ENCODE measurements at regions of chr22 and their contacts with region 1.

Region 1: GRCh38 chr22:40436505-40437451 is 66.4 kb downstream of the SGSM3 start:
- DNase-seq: peak in 9 of 35 experiments; percentile 5 to 81 (median 24)
- ATAC-seq: peak; percentile 59 to 76 (median 64)
- H3K4me3 ChIP-seq: peak overlapping the region in 1 of 2 donors; percentile 27
- H3K4me3 Mint-ChIP-seq: peak overlapping the region in 1 of 3 donors; percentile 48
- H3K27ac ChIP-seq: peak overlapping the region; percentile 28
- H3K27ac Mint-ChIP-seq: peak overlapping the region; percentile 65 to 82
- H3K4me1 ChIP-seq: peaks cover 7 to 28% of the 10 kb centered on the region in 2 experiments
- H3K4me1 Mint-ChIP-seq: peaks cover 37 to 73% (median 61%) of the 10 kb centered on the region in 3 donors
- H3K27me3 ChIP-seq: no peaks in the 10 kb centered on the region
- H3K27me3 Mint-ChIP-seq: no peaks in the 10 kb centered on the region

Region 2: DNA sequence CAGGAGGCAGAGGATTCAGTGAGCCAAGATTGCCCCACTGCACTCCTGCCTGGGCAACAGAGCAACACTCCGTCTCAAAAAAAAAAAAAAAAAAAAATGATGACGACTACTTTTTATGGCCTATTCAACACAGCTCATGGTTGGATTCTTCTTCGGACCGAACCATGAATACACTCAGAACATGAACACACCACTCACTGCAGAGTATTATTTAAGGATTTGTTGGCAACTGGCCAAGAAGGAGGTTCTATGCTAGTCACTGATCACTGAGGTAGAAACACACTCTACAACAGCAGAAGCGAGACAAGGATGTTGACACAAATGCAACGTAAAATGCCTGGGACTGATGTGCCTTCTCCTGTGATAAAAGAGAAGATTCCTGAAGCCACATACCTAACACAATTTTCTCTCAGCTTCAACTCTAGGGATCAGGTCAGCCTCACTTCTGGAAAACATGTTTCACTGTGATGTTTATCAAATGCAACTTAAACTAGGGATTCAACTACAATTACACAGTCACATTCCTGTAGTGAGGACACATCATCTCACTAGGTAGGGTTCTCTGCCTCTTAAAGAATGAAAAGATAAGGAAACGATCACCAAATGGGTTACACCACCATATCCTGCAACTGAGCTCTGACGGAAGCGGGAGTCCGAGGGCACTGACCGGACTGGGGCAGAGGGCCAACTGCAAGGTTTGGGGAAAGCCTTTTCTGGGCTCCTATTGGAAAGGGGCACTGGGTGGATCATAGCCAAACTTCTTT is 16.1 kb after region 1 on chr22:
- CTCF ChIA-PET with region 1: interaction called, 4 to 10 read pairs
- POLR2A ChIA-PET with region 1: interaction called, 3 to 8 read pairs
- DNase-seq: peak in 1 of 35 experiments; percentile 41
- ATAC-seq: peak in 1 of 4 experiments; percentile 38
- H3K4me3 ChIP-seq: no peak overlapping the region
- H3K4me3 Mint-ChIP-seq: peak overlapping the region; percentile 14 to 69 (median 49)
- H3K27ac ChIP-seq: no peak overlapping the region
- H3K27ac Mint-ChIP-seq: peak overlapping the region; percentile 91 to 94
- H3K4me1 ChIP-seq: peaks cover 33 to 59% of the 10 kb centered on the region in 2 experiments
- H3K4me1 Mint-ChIP-seq: peaks cover 72 to 88% (median 83%) of the 10 kb centered on the region in 3 donors
- H3K27me3 ChIP-seq: no peaks in the 10 kb centered on the region
- H3K27me3 Mint-ChIP-seq: no peaks in the 10 kb centered on the region

Region 3: DNA sequence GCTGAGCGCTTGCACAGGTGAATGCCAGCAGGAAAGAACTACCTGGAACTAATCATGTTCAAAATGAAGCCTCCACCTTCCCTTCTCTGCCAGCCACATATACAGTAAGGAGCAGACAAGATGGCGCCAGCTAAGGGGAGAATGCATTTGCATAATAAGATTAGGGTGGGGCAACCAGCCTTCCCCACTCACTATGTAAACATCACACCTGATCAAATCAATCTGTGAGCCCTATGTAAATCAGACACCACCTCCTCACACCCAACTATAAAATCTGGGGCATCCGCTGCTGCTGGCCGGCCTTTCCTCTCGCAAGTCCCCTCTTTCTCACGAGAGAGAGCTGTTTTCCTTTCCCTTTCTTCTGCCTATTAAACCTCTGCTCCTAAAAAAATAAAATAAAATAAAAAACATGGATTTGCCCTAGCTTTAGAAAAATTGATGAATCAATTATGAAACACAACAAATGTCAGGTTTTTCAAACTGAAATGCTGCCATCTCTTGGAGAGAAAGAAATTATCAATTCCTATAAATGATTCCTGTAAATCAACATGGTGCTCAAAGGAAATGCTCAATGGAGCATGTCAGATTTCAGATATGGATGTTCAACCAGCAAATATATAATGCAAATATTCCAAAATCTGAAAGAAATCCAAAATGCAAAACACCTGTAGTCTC is 42.5 kb after region 1 on chr22:
- CTCF ChIA-PET with region 1: interaction called in 1 of 2 experiments, 13 read pairs
- POLR2A ChIA-PET with region 1: interaction called in 1 of 2 experiments, 5 read pairs
- DNase-seq: peak in 1 of 35 experiments; percentile 22
- ATAC-seq: no peak
- H3K4me3 ChIP-seq: no peak overlapping the region
- H3K4me3 Mint-ChIP-seq: no peak overlapping the region
- H3K27ac ChIP-seq: no peak overlapping the region
- H3K27ac Mint-ChIP-seq: no peak overlapping the region
- H3K4me1 ChIP-seq: peaks cover 4 to 12% of the 10 kb centered on the region in 2 experiments
- H3K4me1 Mint-ChIP-seq: peaks cover 39 to 43% (median 42%) of the 10 kb centered on the region in 3 donors
- H3K27me3 ChIP-seq: no peaks in the 10 kb centered on the region
- H3K27me3 Mint-ChIP-seq: no peaks in the 10 kb centered on the region

Region 4: GRCh38 chr22:40645579-40646197 is 208.9 kb after region 1 on chr22:
- CTCF ChIA-PET with region 1: interaction called, 14 to 36 read pairs
- POLR2A ChIA-PET with region 1: no interaction called
- DNase-seq: no peak
- ATAC-seq: peak in 2 of 4 experiments; percentile 13 to 31
- H3K4me3 ChIP-seq: no peak overlapping the region
- H3K4me3 Mint-ChIP-seq: no peak overlapping the region
- H3K27ac ChIP-seq: no peak overlapping the region
- H3K27ac Mint-ChIP-seq: no peak overlapping the region
- H3K4me1 ChIP-seq: peaks cover 3 to 7% of the 10 kb centered on the region in 2 experiments
- H3K4me1 Mint-ChIP-seq: peaks cover 4 to 14% (median 6%) of the 10 kb centered on the region in 3 donors
- H3K27me3 ChIP-seq: no peaks in the 10 kb centered on the region
- H3K27me3 Mint-ChIP-seq: no peaks in the 10 kb centered on the region

Region 5: GRCh38 chr22:40898850-40899357 is 462.1 kb after region 1 on chr22:
- CTCF ChIA-PET with region 1: interaction called in 1 of 2 experiments, 14 read pairs
- POLR2A ChIA-PET with region 1: no interaction called
- DNase-seq: peak in 1 of 35 experiments; percentile 68
- ATAC-seq: peak; percentile 52 to 65 (median 58)
- H3K4me3 ChIP-seq: no peak overlapping the region
- H3K4me3 Mint-ChIP-seq: no peak overlapping the region
- H3K27ac ChIP-seq: no peak overlapping the region
- H3K27ac Mint-ChIP-seq: no peak overlapping the region
- H3K4me1 ChIP-seq: no peaks in the 10 kb centered on the region
- H3K4me1 Mint-ChIP-seq: peaks cover 5 to 9% (median 5%) of the 10 kb centered on the region in 3 donors
- H3K27me3 ChIP-seq: no peaks in the 10 kb centered on the region
- H3K27me3 Mint-ChIP-seq: no peaks in the 10 kb centered on the region

Measured in T-cell (primary cell).